ENCODE measurements at regions of chr7 and their contacts with region 1.

Region 1: GRCh38 chr7:114922016-114922651 is at the start of gene MDFIC:
- DNase-seq: peak; percentile 71 to 82
- ATAC-seq: peak; percentile 80 to 89 (median 86)
- H3K4me3 ChIP-seq: peak within 1 kb of the TSS; percentile 78
- H3K27ac ChIP-seq: peak within 1 kb of the TSS; percentile 78
- H3K4me1 ChIP-seq: peaks cover 17% of the 10 kb centered on the region
- H3K27me3 ChIP-seq: no peaks in the 10 kb centered on the region
- CTCF ChIP-seq: no peak
- total RNA-seq, gene MDFIC: 5.5 to 14.6 (median 8.2) TPM

Region 2: DNA sequence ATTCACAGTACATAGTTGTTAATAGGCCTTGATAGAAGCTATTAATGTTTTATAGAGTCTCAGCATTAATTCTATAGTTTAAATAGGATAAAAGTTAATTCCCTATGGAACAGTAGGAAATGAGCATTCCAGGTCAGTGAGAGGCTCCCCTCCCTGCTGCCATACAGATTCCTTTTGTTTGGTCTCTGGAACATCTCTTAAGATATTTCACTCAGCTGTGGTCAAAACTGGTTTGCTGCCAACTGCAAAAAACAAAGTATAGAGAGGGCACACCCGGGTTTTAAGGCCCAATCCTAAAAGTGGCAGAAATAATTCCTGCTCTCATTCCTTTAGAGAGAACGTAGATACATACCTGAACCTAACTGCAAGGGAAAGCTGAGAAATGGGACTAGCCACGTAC is 51.0 kb after region 1 on chr7:
- intact Hi-C with region 1: no loop called
- DNase-seq: no peak
- ATAC-seq: no peak
- H3K4me3 ChIP-seq: no peak overlapping the region
- H3K27ac ChIP-seq: no peak overlapping the region
- H3K4me1 ChIP-seq: peaks cover 2% of the 10 kb centered on the region
- H3K27me3 ChIP-seq: no peaks in the 10 kb centered on the region
- CTCF ChIP-seq: no peak

Region 3: GRCh38 chr7:114988755-114989375 is 66.7 kb after region 1 on chr7:
- intact Hi-C with region 1: loop called in 1 of 2 experiments (anchors 5 kb)
- DNase-seq: peak; percentile 64 to 72
- ATAC-seq: no peak
- H3K4me3 ChIP-seq: no peak overlapping the region
- H3K27ac ChIP-seq: no peak overlapping the region
- H3K4me1 ChIP-seq: peaks cover 27% of the 10 kb centered on the region
- H3K27me3 ChIP-seq: no peaks in the 10 kb centered on the region
- CTCF ChIP-seq: no peak

Measured in psoas muscle (tissue), 8 donors.